ENCODE measurements at regions of chr12 and their contacts with region 1.

Region 1: DNA sequence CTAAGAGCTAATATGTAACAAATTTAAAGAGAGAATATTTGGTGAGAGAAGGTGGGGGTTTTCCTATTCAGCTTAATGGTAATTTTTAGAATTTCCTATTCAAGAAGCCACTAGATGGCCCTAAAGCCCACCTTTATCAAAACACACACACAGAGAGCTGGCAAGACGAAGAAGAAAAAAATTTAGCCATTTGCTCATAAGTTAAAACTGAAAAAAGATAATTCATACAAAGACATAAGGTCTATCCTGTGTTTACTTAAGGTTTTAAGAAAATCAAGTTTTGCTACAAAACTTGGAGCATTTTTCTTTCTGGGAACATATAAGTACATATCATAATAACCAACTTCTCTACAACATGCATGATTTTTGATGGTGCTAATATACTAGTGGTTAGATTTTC is 46.8 kb upstream of the PCED1B start:
- DNase-seq: no peak
- ATAC-seq: peak; percentile 83

Region 2: DNA sequence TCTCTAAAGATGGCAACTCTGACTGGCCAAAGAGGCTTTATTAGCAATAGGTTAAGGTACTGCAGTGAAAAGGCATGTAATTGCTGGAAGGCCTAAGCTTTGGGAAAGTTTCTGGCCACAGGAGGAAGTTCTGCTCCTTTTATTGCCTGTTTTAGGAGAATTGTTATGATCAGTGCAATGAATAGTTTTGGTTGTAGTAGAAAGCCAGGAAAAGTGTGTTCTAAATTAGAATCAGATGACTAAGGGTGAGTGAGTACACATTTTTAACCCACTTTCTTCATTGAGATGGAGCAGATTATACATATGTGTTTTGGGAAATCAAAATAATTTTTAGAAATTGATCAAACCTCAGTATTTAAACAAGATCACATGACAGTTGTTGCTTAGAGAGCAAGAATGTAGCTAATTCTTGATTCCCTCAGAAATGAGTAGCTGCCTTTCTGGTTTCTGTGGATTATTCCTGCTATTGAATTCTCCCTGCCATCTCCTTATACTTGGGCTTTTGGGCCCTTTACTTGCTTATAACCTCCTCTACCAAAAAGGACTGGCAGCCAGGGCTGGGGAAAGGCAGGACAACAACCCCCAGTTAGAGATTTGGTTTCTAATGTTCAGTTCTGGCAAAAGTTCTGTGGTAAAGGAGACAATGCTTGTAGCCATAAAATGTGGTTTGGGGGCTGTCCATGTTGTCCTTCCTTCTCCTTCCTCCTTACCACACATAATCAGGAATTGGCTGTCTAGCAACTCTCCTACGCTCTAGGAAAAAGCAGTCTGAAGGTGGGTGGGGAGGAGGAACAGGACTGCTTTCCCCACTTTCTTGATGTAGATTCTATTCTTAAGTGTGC is 424.0 kb before region 1 on chr12:
- intact Hi-C with region 1: no loop called
- DNase-seq: no peak
- ATAC-seq: no peak

Region 3: GRCh38 chr12:47307680-47308399 is 275.2 kb after region 1 on chr12:
- intact Hi-C with region 1: loop called (anchors 10 kb)
- DNase-seq: no peak
- ATAC-seq: peak; percentile 82

Region 4: GRCh38 chr12:47686645-47687240 is 654.1 kb after region 1 on chr12:
- intact Hi-C with region 1: loop called (anchors 10 kb)
- DNase-seq: no peak
- ATAC-seq: no peak